ENCODE measurements at regions of chr17 and their contacts with region 1.

Region 1: GRCh38 chr17:80210348-80211108 is 9.6 kb downstream of the SGSH start:
- DNase-seq: no peak
- ATAC-seq: peak in 1 of 8 donors; percentile 19
- H3K4me3 ChIP-seq: no peak overlapping the region
- H3K27ac ChIP-seq: no peak overlapping the region
- H3K4me1 ChIP-seq: peaks cover 0 to 18% (median 0%) of the 10 kb centered on the region in 9 donors
- H3K27me3 ChIP-seq: no peaks in the 10 kb centered on the region
- CTCF ChIP-seq: no peak

Region 2: DNA sequence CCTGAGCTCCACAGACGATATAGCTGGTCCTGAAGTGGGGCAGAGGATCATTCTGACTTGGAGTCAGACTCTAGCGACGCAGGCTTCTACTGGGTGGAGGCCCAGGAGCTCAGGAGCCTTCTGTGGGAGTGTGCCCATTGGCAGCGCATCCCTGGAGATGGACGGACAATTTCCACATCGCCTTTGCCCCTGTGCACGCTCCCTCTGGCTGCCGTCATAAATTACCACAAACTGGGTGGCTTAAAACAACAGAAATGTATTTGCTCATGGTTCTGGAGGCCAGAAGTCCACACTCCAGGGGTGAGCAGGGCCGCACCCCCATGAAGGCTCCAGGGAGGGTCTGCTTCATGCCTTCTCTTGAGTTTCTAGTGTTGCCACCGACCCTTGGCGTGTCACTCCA is 33.8 kb before region 1 on chr17:
- intact Hi-C with region 1: loop called in 1 of 10 experiments (anchors 1 kb)
- DNase-seq: no peak
- ATAC-seq: no peak
- H3K4me3 ChIP-seq: no peak overlapping the region
- H3K27ac ChIP-seq: no peak overlapping the region
- H3K4me1 ChIP-seq: peaks cover 0 to 7% (median 0%) of the 10 kb centered on the region in 9 donors
- H3K27me3 ChIP-seq: peaks cover 0 to 10% (median 0%) of the 10 kb centered on the region in 7 donors
- CTCF ChIP-seq: no peak

Measured in heart right ventricle (tissue), 16 donors.